Activated CD4-positive, alpha-beta T cell treated with anti-CD3 and anti-CD28 coated beads, Interleukin-2, amount 10 ng/mL, durations not matched to agents 7 days and 5 days (primary cell): ENCODE measurements at regions of chr2 and their contacts with region 1.

Region 1: DNA sequence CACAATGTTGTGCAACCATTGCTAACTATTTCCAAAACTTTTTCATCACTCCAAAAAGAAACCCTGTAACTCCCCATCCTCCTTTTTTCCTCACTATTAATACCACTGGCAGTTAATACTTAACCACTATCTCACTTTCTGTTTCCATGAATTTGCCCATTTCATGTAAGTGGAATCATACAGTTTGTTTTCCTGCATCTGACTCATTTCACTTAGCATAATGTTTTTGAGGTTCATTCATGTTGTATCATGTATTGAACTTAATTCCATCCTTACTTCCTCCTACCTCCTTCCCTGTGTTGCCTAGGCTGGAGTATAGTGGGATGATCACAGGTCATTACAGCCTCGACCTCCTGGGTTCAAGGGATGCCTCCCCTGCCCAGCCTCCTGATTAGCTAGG is 68.3 kb downstream of the FAM117B start:
- DNase-seq: no peak
- H3K4me3 Mint-ChIP-seq: no peak overlapping the region
- H3K27ac Mint-ChIP-seq: no peak overlapping the region
- H3K4me1 Mint-ChIP-seq: peaks cover 52% of the 10 kb centered on the region
- H3K27me3 Mint-ChIP-seq: no peaks in the 10 kb centered on the region

Region 2: DNA sequence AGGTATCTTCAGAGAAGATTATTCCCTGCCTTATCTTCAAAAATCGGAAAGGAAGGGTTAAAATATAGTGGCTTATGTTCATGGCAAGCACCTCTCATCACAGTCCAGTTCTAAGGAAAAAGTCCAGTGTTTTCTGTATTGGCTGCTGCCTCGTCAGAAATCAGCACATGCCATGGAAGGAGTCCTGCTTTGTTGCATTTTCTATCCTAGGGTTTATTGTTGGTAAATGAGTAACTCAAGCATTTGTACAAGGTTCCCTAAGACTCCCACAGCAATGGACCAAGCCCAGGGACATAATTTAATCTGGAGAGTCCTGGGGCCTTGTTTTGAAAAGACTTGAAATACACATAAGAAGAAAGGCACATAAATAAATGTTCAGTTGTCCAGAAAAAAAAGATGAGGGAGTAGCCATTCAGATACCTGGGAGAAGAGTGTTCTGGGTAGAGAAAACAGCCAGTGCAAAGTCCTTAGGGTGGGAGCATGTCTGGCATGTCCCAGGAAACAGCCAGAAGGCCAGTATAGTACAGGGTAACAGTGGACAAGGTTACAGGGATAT is 338.0 kb after region 1 on chr2:
- CTCF ChIA-PET with region 1: no interaction called
- POLR2A ChIA-PET with region 1: interaction called, 15 read pairs
- DNase-seq: no peak
- H3K4me3 Mint-ChIP-seq: no peak overlapping the region
- H3K27ac Mint-ChIP-seq: no peak overlapping the region
- H3K4me1 Mint-ChIP-seq: no peaks in the 10 kb centered on the region
- H3K27me3 Mint-ChIP-seq: no peaks in the 10 kb centered on the region